GM13976 (cell line): ENCODE measurements at regions of chr6 and their contacts with region 1.

Region 1: GRCh38 chr6:24064082-24064481 is 61.9 kb upstream of the NRSN1 start:
- DNase-seq: no peak
- CTCF ChIP-seq: peak; percentile 23

Region 2: DNA sequence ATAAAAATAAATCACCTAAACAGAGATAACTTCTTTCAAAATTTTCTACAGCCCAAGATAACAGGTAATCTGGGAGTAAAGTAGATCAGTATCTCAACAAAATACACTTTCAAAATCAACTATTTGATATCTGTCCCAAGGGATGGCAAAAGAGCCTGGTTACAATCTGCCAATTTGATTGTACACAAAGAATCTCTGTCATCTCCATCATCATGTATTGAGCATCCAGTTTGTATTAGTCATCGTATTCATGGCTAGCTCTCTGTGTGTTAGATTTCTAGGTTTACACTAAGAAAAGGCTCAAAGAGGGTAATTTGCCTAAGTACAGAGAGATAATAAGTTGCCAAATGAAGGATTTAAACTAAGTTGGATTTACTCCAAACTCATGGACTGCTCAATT is 267.0 kb before region 1 on chr6:
- in situ Hi-C with region 1: no loop called
- DNase-seq: no peak
- CTCF ChIP-seq: no peak

Region 3: DNA sequence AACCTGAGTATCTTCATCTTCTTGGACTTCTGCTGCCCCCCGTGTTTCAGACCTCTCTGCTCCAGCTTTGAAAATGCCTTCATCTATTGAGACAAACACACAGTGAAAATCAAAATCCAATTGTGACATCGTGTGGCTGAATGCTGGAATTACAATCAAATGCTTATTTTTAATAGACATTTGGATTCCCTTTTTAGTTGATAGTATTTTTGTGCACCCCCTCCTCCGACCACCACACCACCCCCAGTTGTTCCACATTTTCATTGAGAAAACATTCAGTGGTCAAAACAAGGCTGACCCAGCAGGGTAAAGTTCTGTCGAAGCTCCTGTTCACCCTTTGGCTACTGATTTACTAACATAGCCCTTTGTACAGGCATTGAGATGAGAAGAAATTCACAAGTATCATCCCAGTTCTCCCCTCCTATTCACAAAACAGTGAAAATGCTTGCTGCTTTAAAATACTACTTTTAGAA is 141.0 kb after region 1 on chr6:
- in situ Hi-C with region 1: loop called (anchors 10 kb)
- DNase-seq: peak; percentile 26
- CTCF ChIP-seq: peak; percentile 45

Region 4: DNA sequence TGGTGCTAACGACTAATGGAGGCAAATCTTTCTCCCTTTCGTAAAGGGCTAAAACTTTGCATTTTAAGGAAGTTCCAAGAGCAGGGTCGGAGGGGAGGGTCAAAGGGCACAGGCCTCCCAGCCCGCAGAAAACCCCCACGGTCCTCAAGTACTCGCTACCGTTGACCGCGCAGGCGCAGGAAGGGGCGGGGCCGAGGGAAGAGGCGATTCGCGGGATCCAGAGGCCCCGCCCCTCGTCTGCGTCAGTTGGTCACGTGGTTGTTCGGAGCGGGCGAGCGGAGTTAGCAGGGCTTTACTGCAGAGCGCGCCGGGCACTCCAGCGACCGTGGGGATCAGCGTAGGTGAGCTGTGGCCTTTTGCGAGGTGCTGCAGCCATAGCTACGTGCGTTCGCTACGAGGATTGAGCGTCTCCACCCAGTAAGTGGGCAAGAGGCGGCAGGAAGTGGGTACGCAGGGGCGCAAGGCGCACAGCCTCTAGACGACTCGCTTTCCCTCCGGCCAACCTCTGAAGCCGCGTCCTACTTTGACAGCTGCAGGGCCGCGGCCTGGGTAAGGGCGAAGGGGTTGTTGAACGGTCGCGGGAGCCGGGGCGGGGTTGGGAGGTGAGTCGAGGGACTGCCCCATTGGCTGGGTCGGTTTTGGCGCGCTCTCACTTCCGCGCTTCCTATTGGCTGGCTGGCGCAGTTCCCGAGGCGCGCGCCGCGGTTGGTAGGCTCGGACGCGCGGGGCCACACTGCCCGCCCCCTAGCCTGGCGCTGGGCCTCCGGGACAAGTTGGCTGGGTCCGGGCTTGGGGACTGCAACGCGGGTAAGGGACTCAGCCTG is 710.8 kb after region 1 on chr6 and contains the start of gene GMNN:
- in situ Hi-C with region 1: no loop called
- DNase-seq: peak; percentile 96
- CTCF ChIP-seq: no peak